ENCODE measurements at regions of chr19 and their contacts with region 1.

Region 1: GRCh38 chr19:34639491-34640085 is 37.4 kb downstream of the SCGB2B2 start:
- DNase-seq: peak; percentile 31 to 68 (median 46)
- H3K4me3 ChIP-seq: no peak overlapping the region
- H3K4me3 Mint-ChIP-seq: no peak overlapping the region
- H3K27ac ChIP-seq: no peak overlapping the region
- H3K27ac Mint-ChIP-seq: no peak overlapping the region
- H3K4me1 ChIP-seq: peaks cover 3% of the 10 kb centered on the region
- H3K4me1 Mint-ChIP-seq: peaks cover 0 to 4% (median 0%) of the 10 kb centered on the region in 3 donors
- H3K27me3 ChIP-seq: no peaks in the 10 kb centered on the region
- H3K27me3 Mint-ChIP-seq: peaks cover 0 to 2% of the 10 kb centered on the region in 2 donors

Region 2: GRCh38 chr19:34712395-34713261 is 73.0 kb after region 1 on chr19:
- CTCF ChIA-PET with region 1: interaction called, 30 read pairs
- POLR2A ChIA-PET with region 1: no interaction called
- DNase-seq: peak; percentile 24 to 72 (median 64)
- H3K4me3 ChIP-seq: no peak overlapping the region
- H3K4me3 Mint-ChIP-seq: no peak overlapping the region
- H3K27ac ChIP-seq: no peak overlapping the region
- H3K27ac Mint-ChIP-seq: no peak overlapping the region
- H3K4me1 ChIP-seq: no peaks in the 10 kb centered on the region
- H3K4me1 Mint-ChIP-seq: no peaks in the 10 kb centered on the region
- H3K27me3 ChIP-seq: no peaks in the 10 kb centered on the region
- H3K27me3 Mint-ChIP-seq: peaks cover 26 to 60% of the 10 kb centered on the region in 2 donors

Region 3: DNA sequence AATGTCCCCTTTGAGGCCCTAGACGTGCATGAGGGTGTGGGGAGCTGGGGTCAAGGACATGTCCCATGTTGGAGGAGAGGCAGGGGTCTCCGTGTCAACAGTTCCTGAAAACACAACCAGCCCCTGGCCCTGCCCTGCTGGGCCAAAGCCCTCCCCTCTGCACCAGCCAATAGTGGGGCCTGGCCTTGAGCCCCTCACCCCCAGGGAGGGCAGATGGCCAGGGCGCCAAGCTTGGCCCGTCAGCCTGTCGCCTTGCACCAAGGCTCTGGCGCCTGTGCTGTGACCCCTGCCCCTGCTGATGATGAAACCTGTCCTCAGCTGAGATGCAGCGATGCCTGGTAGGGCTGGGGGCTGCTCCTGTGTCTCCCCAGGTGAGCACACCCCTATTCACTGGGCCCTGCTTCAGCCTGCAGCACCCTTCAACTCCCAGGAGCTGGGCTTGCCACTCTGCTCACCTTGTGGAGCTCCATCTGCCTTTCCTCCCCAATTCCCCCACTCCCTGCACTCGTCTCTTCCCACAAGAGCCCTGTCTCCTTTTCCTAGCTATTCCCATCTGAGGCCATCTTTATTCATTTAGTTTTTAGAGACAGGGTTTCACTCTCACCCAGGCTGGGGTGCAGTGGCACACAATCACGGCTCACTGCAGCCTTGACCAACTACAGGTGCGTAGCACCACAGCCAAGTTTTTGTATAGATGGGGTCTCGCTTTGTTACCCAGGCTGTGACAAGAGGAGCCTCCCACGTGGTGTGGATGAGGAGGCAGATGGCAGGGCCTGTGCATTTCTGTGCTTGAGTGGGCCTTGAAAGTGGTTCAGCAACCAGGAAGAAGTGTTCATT is 640.6 kb after region 1 on chr19:
- CTCF ChIA-PET with region 1: no interaction called
- POLR2A ChIA-PET with region 1: no interaction called
- DNase-seq: no peak
- H3K4me3 ChIP-seq: no peak overlapping the region
- H3K4me3 Mint-ChIP-seq: no peak overlapping the region
- H3K27ac ChIP-seq: no peak overlapping the region
- H3K27ac Mint-ChIP-seq: peak overlapping the region in 2 of 8 donors; percentile 23 to 88
- H3K4me1 ChIP-seq: no peaks in the 10 kb centered on the region
- H3K4me1 Mint-ChIP-seq: peaks cover 6 to 9% (median 8%) of the 10 kb centered on the region in 3 donors
- H3K27me3 ChIP-seq: no peaks in the 10 kb centered on the region
- H3K27me3 Mint-ChIP-seq: peaks cover 11 to 22% of the 10 kb centered on the region in 2 donors

Measured in CD8-positive, alpha-beta memory T cell (primary cell).